MCF 10A (cell line): ENCODE measurements at regions of chr16 and their contacts with region 1.

Region 1: GRCh38 chr16:57413301-57413730 is 8.7 kb downstream of the CCL17 start:
- DNase-seq: no peak
- H3K4me3 Mint-ChIP-seq: no peak overlapping the region
- H3K27ac Mint-ChIP-seq: no peak overlapping the region
- H3K4me1 Mint-ChIP-seq: peaks cover 22% of the 10 kb centered on the region
- H3K27me3 Mint-ChIP-seq: no peaks in the 10 kb centered on the region
- CTCF ChIP-seq: no peak

Region 2: GRCh38 chr16:57084257-57084770 is 329.0 kb before region 1 on chr16:
- CTCF ChIA-PET with region 1: interaction called, 6 read pairs
- POLR2A ChIA-PET with region 1: no interaction called
- intact Hi-C with region 1: loop called (anchors 5 kb)
- DNase-seq: peak; percentile 74
- H3K4me3 Mint-ChIP-seq: no peak overlapping the region
- H3K27ac Mint-ChIP-seq: no peak overlapping the region
- H3K4me1 Mint-ChIP-seq: peaks cover 4% of the 10 kb centered on the region
- H3K27me3 Mint-ChIP-seq: no peaks in the 10 kb centered on the region
- CTCF ChIP-seq: peak; percentile 92

Region 3: GRCh38 chr16:57244767-57245471 is 168.4 kb before region 1 on chr16 and contains the start of gene ARL2BP:
- CTCF ChIA-PET with region 1: interaction called, 5 read pairs
- POLR2A ChIA-PET with region 1: no interaction called
- intact Hi-C with region 1: loop called (anchors 5 kb)
- DNase-seq: peak; percentile 97
- H3K4me3 Mint-ChIP-seq: peak within 1 kb of the TSS; percentile 82
- H3K27ac Mint-ChIP-seq: peak within 1 kb of the TSS; percentile 97
- H3K4me1 Mint-ChIP-seq: peaks cover 10% of the 10 kb centered on the region
- H3K27me3 Mint-ChIP-seq: no peaks in the 10 kb centered on the region
- CTCF ChIP-seq: peak; percentile 8
- total RNA-seq, gene ARL2BP: 94.4 and 114 TPM in 2 replicates

Region 4: GRCh38 chr16:57364143-57364542 is 49.2 kb before region 1 on chr16:
- CTCF ChIA-PET with region 1: interaction called, 11 read pairs
- POLR2A ChIA-PET with region 1: no interaction called
- intact Hi-C with region 1: no loop called
- DNase-seq: no peak
- H3K4me3 Mint-ChIP-seq: no peak overlapping the region
- H3K27ac Mint-ChIP-seq: no peak overlapping the region
- H3K4me1 Mint-ChIP-seq: peaks cover 5% of the 10 kb centered on the region
- H3K27me3 Mint-ChIP-seq: peaks cover 2% of the 10 kb centered on the region
- CTCF ChIP-seq: no peak

Region 5: DNA sequence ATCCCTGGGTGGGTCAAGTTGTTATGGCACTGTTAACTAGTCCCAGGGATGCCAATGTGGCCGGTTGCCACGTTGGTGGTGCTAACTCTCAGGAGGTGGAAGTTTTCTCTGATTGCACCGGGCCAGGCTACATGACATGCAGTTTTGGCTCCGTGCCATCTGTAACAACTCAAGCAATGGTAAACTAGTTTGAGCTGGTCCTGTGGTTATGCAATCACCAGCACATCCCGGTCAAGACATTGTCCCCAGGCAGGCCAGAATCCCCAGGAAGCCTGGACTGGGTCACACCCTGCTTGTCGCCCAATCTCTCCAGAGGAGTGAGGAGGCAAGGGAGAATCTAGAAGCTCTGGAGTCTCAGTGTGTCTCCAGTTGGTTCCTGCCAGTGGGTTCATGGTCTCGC is 18.9 kb before region 1 on chr16:
- CTCF ChIA-PET with region 1: interaction called, 19 read pairs
- POLR2A ChIA-PET with region 1: no interaction called
- intact Hi-C with region 1: no loop called
- DNase-seq: peak; percentile 82
- H3K4me3 Mint-ChIP-seq: no peak overlapping the region
- H3K27ac Mint-ChIP-seq: no peak overlapping the region
- H3K4me1 Mint-ChIP-seq: no peaks in the 10 kb centered on the region
- H3K27me3 Mint-ChIP-seq: peaks cover 17% of the 10 kb centered on the region
- CTCF ChIP-seq: no peak

Region 6: DNA sequence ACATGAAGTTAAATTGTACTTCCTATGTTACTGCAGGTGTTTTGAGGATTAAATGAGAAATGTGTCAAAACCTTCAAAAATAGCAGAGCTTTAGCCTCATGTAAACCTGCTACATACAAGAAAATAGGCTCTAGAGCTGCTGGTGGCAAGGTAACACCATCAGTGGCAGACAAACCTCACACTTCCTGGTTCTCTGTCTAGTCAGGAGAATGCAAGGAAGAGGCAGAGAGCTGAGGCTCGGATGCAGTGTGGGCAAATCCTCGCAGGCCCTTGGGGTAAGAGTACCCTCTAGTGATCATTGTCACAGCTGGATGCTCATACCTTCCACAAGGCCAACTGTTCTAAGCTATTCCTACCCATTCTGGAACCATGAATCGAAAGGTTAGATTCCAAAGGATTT is 19.7 kb after region 1 on chr16:
- CTCF ChIA-PET with region 1: interaction called, 55 read pairs
- POLR2A ChIA-PET with region 1: no interaction called
- intact Hi-C with region 1: no loop called
- DNase-seq: no peak
- H3K4me3 Mint-ChIP-seq: no peak overlapping the region
- H3K27ac Mint-ChIP-seq: no peak overlapping the region
- H3K4me1 Mint-ChIP-seq: no peaks in the 10 kb centered on the region
- H3K27me3 Mint-ChIP-seq: no peaks in the 10 kb centered on the region
- CTCF ChIP-seq: no peak

Region 7: DNA sequence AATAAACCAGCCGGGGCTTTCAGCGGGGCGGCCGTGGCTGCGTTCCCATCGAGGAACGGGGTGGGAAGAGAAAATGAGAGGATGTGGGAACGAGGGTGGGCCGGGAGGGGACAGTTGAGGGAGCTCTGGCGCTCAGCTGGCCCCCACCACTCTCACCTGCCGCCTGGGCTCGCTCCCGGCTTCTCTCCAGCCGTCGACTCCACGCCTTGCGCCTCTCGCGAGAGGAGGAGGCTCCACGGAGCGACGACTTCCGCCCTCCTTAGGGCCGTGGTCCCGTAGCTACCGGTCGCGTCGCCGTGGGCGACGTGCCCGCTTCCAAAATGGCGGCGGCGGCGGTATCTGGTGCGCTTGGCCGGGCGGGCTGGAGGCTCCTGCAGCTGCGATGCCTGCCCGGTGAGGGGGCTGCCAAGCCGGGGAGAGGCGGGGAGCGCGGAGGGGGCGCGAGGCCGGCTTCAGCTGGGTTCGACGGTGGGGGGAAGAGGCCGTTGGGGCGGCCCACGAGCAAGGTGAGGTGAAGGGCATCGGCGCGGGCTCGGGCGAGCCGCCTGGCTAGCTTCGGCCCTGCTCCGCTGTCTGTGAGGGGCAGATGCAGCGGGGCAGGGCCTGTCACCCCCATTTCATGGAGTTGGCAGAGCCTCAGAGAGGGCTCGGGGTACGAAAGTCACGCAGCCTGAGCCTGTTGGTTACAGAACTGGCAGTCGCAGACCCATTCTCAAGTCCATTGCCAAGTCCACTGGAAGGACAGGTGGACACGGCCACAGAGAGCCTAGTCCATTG is 34.1 kb after region 1 on chr16 and contains the starts of genes CIAPIN1 and COQ9:
- CTCF ChIA-PET with region 1: interaction called, 52 read pairs
- POLR2A ChIA-PET with region 1: interaction called, 3 read pairs
- intact Hi-C with region 1: no loop called
- DNase-seq: peak; percentile 95
- H3K4me3 Mint-ChIP-seq: peak within 1 kb of the TSS; percentile 90
- H3K27ac Mint-ChIP-seq: peak within 1 kb of the TSS; percentile 97
- H3K4me1 Mint-ChIP-seq: peaks cover 9% of the 10 kb centered on the region
- H3K27me3 Mint-ChIP-seq: no peaks in the 10 kb centered on the region
- CTCF ChIP-seq: no peak
- total RNA-seq, gene CIAPIN1: 99.9 and 105 TPM in 2 replicates
- total RNA-seq, gene COQ9: 72.5 and 80.8 TPM in 2 replicates

Region 8: GRCh38 chr16:57564571-57565270 is 151.4 kb after region 1 on chr16:
- CTCF ChIA-PET with region 1: no interaction called
- POLR2A ChIA-PET with region 1: no interaction called
- intact Hi-C with region 1: no loop called
- DNase-seq: peak; percentile 32
- H3K4me3 Mint-ChIP-seq: no peak overlapping the region
- H3K27ac Mint-ChIP-seq: no peak overlapping the region
- H3K4me1 Mint-ChIP-seq: peaks cover 10% of the 10 kb centered on the region
- H3K27me3 Mint-ChIP-seq: peaks cover 38% of the 10 kb centered on the region
- CTCF ChIP-seq: no peak